ENCODE measurements at regions of chr12 and their contacts with region 1.

Region 1: GRCh38 chr12:103978384-103978982 is 12.8 kb downstream of the TDG start:
- DNase-seq: no peak
- H3K4me3 ChIP-seq: no peak overlapping the region
- H3K27ac ChIP-seq: no peak overlapping the region
- H3K4me1 ChIP-seq: peaks cover 0 to 17% of the 10 kb centered on the region in 2 donors
- H3K27me3 ChIP-seq: no peaks in the 10 kb centered on the region
- CTCF ChIP-seq: no peak
- POLR2A ChIP-seq: no peak

Region 2: GRCh38 chr12:104079024-104079423 is 100.5 kb after region 1 on chr12:
- intact Hi-C with region 1: no loop called
- DNase-seq: no peak
- H3K4me3 ChIP-seq: no peak overlapping the region
- H3K27ac ChIP-seq: no peak overlapping the region
- H3K4me1 ChIP-seq: peaks cover 0 to 8% of the 10 kb centered on the region in 2 donors
- H3K27me3 ChIP-seq: no peaks in the 10 kb centered on the region
- CTCF ChIP-seq: no peak
- POLR2A ChIP-seq: no peak

Region 3: GRCh38 chr12:104090687-104091086 is 112.2 kb after region 1 on chr12:
- intact Hi-C with region 1: loop called in 1 of 2 experiments (anchors 10 kb)
- DNase-seq: no peak
- H3K4me3 ChIP-seq: no peak overlapping the region
- H3K27ac ChIP-seq: no peak overlapping the region
- H3K4me1 ChIP-seq: no peaks in the 10 kb centered on the region
- H3K27me3 ChIP-seq: no peaks in the 10 kb centered on the region
- CTCF ChIP-seq: no peak
- POLR2A ChIP-seq: no peak